ENCODE measurements at regions of chr9 and their contacts with region 1.

Region 1: DNA sequence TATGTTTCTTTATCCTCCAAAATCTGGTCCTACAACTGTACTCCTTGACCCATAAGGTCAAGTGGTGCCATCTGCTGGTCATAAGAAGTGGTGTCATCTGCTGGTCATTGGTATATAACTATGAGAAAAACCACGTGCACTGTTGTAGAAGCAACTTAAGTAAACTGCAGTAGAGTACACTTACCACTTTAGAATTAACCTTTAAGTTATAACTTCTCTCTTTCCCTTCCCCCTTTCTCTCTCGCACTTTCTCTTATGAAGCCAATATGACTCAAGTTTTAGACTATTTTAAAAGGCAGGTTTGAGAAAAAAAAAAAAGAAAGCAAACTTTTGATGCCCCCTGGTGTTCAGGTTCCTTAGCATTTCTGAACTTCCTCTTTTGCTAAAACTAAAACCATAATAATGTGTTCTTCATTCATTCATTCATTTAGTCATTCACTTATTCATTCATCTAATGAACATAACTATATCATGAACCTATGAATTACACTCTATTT is 12.8 kb upstream of the MTAP start:
- DNase-seq: peak in 3 of 6 donors; percentile 21 to 64 (median 55)
- ATAC-seq: peak; percentile 95 to 100 (median 98)
- H3K4me3 ChIP-seq: no peak overlapping the region
- H3K27ac ChIP-seq: no peak overlapping the region
- H3K4me1 ChIP-seq: no peaks in the 10 kb centered on the region
- H3K27me3 ChIP-seq: peaks cover 0 to 4% (median 0%) of the 10 kb centered on the region in 4 donors
- CTCF ChIP-seq: peak; percentile 43 to 74 (median 60)

Region 2: GRCh38 chr9:21326526-21327139 is 463.0 kb before region 1 on chr9:
- intact Hi-C with region 1: loop called in 1 of 3 experiments (anchors 10 kb)
- DNase-seq: no peak
- ATAC-seq: peak in 3 of 4 donors; percentile 84 to 90 (median 90)
- H3K4me3 ChIP-seq: no peak overlapping the region
- H3K27ac ChIP-seq: no peak overlapping the region
- H3K4me1 ChIP-seq: peaks cover 7 to 26% (median 22%) of the 10 kb centered on the region in 3 donors
- H3K27me3 ChIP-seq: no peaks in the 10 kb centered on the region
- CTCF ChIP-seq: peak; percentile 8 to 54 (median 44)

Region 3: GRCh38 chr9:21465859-21466518 is 323.6 kb before region 1 on chr9:
- intact Hi-C with region 1: loop called in 2 of 3 experiments (anchors 10 kb)
- DNase-seq: no peak
- ATAC-seq: peak; percentile 50 to 89 (median 78)
- H3K4me3 ChIP-seq: no peak overlapping the region
- H3K27ac ChIP-seq: no peak overlapping the region
- H3K4me1 ChIP-seq: no peaks in the 10 kb centered on the region
- H3K27me3 ChIP-seq: no peaks in the 10 kb centered on the region
- CTCF ChIP-seq: peak; percentile 47 to 60 (median 56)

Region 4: DNA sequence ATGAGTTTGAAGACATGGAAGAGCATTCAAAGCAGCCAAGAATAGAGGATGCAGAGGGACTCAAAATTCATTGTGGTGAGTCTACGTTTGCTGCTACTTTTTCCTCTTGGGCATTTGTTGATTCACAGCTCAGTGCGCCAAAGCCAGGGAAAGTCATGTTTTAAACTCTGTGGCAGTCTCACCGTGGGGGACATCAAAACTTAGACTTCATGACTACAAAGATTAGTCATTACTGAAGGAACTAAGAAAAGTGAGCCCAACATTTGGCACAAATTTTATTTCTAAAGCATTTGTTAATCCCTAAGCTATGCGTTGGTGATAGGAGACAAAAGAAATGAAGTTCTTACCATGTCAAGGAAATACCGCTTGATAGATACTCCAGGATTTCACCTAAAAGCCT is 60.8 kb before region 1 on chr9:
- intact Hi-C with region 1: loop called in 1 of 3 experiments (anchors 10 kb)
- DNase-seq: no peak
- ATAC-seq: no peak
- H3K4me3 ChIP-seq: no peak overlapping the region
- H3K27ac ChIP-seq: no peak overlapping the region
- H3K4me1 ChIP-seq: no peaks in the 10 kb centered on the region
- H3K27me3 ChIP-seq: no peaks in the 10 kb centered on the region
- CTCF ChIP-seq: no peak

Measured in pancreas (tissue), 10 donors.